B cell (primary cell): ENCODE measurements at regions of chrX and their contacts with region 1.

Region 1: GRCh38 chrX:13658602-13659001 is 5.7 kb downstream of the TCEANC start:
- DNase-seq: peak; percentile 70
- ATAC-seq: no peak
- H3K4me3 ChIP-seq: no peak overlapping the region
- H3K4me3 Mint-ChIP-seq: no peak overlapping the region
- H3K27ac ChIP-seq: peak overlapping the region in 1 of 2 donors; percentile 25
- H3K27ac Mint-ChIP-seq: peak overlapping the region; percentile 61
- H3K4me1 ChIP-seq: peaks cover 8 to 9% of the 10 kb centered on the region in 2 donors
- H3K4me1 Mint-ChIP-seq: peaks cover 12% of the 10 kb centered on the region
- H3K27me3 ChIP-seq: no peaks in the 10 kb centered on the region
- H3K27me3 Mint-ChIP-seq: no peaks in the 10 kb centered on the region
- CTCF ChIP-seq: peak; percentile 62

Region 2: GRCh38 chrX:13515211-13515930 is 143.2 kb before region 1 on chrX:
- CTCF ChIA-PET with region 1: no interaction called
- POLR2A ChIA-PET with region 1: no interaction called
- intact Hi-C with region 1: no loop called
- DNase-seq: no peak
- ATAC-seq: no peak
- H3K4me3 ChIP-seq: no peak overlapping the region
- H3K4me3 Mint-ChIP-seq: no peak overlapping the region
- H3K27ac ChIP-seq: no peak overlapping the region
- H3K27ac Mint-ChIP-seq: no peak overlapping the region
- H3K4me1 ChIP-seq: no peaks in the 10 kb centered on the region
- H3K4me1 Mint-ChIP-seq: no peaks in the 10 kb centered on the region
- H3K27me3 ChIP-seq: peaks cover 0 to 8% (median 0%) of the 10 kb centered on the region in 4 experiments
- H3K27me3 Mint-ChIP-seq: peaks cover 3% of the 10 kb centered on the region
- CTCF ChIP-seq: no peak

Region 3: DNA sequence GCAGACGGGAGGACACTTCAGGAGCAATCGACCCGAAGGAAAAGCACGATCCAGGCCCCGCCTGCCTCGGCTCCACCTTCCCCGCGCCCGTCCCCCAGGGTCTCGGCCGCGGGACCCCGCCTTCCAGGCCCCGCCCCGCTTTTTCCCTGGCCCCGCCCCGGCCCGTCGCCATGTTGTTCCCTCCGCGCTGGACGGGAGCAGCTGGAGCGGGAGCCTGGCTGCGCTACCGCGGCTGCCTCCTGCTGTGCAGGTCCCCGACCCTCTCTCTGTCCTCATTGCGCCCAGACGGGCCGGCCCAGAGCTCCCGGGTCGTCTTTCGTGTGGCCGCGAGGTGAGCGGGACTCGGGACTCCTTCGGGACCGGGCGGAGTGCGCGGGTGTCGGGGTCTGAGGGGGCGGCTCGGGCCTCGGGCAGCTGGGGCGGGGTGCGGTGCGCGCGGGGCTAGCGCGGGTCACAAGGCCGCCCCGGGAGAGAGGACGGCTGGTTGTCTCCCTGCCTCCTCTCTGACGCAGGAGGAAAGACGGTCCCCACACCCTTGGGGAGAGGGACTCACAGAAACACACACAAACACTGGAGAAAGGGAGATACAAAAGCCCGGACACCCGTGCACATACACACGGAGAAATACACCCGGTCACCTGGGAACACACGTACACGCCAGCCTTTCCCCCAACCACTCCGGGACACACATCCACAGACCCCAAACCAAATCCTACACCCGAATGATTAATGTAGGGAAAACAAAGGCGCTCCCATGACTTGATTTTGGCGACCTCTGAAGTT is 30.5 kb after region 1 on chrX and contains the start of gene RAB9A:
- CTCF ChIA-PET with region 1: interaction called, 3 read pairs
- POLR2A ChIA-PET with region 1: interaction called, 3 read pairs
- intact Hi-C with region 1: loop called (anchors 2 kb)
- DNase-seq: peak; percentile 79
- ATAC-seq: peak; percentile 91
- H3K4me3 ChIP-seq: peak within 1 kb of the TSS; percentile 61 to 89 (median 78)
- H3K4me3 Mint-ChIP-seq: peak within 1 kb of the TSS; percentile 93
- H3K27ac ChIP-seq: peak within 1 kb of the TSS; percentile 70 to 85
- H3K27ac Mint-ChIP-seq: peak within 1 kb of the TSS; percentile 91
- H3K4me1 ChIP-seq: peaks cover 41 to 43% of the 10 kb centered on the region in 2 donors
- H3K4me1 Mint-ChIP-seq: peaks cover 53% of the 10 kb centered on the region
- H3K27me3 ChIP-seq: no peaks in the 10 kb centered on the region
- H3K27me3 Mint-ChIP-seq: no peaks in the 10 kb centered on the region
- CTCF ChIP-seq: no peak
- total RNA-seq, gene RAB9A: 16.7 and 17.1 TPM in 2 replicates

Region 4: DNA sequence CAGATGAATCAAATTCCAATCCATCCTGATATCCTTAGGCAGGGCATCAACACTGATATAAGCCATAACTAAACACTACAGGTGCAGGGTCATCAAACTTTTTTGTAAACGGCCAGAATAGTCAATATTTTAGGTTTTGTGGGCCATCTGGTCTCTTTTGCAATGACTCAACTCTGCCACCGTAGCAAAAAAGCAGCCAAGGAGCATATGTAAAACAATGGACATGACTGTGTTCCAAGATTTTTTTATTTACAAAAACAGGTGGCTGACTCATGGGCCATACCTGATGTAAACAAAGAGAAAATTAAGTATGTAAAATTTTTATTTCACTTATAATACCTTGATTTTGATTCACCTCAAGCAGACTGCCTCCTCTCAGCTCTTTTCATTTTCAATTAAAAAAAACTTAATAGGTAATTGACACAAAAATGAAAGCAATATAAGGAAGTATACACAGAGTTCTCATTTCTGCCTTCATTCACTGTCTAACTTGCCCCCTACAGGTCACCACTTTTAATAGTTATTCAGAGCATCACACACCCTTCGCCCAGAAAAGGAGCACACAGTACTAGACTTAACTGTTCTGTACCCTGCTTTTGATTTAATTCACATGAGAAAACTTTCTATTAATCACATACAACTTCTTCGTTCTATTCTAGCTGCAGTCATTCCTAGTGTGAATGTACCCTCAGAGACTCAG is 193.5 kb after region 1 on chrX:
- CTCF ChIA-PET with region 1: no interaction called
- POLR2A ChIA-PET with region 1: no interaction called
- intact Hi-C with region 1: loop called (anchors 2 kb)
- DNase-seq: peak; percentile 33
- ATAC-seq: no peak
- H3K4me3 ChIP-seq: no peak overlapping the region
- H3K4me3 Mint-ChIP-seq: no peak overlapping the region
- H3K27ac ChIP-seq: no peak overlapping the region
- H3K27ac Mint-ChIP-seq: no peak overlapping the region
- H3K4me1 ChIP-seq: no peaks in the 10 kb centered on the region
- H3K4me1 Mint-ChIP-seq: peaks cover 3% of the 10 kb centered on the region
- H3K27me3 ChIP-seq: peaks cover 0 to 3% (median 0%) of the 10 kb centered on the region in 4 experiments
- H3K27me3 Mint-ChIP-seq: no peaks in the 10 kb centered on the region
- CTCF ChIP-seq: peak; percentile 32

Region 5: GRCh38 chrX:13864264-13864663 is 205.7 kb after region 1 on chrX:
- CTCF ChIA-PET with region 1: no interaction called
- POLR2A ChIA-PET with region 1: no interaction called
- intact Hi-C with region 1: no loop called
- DNase-seq: no peak
- ATAC-seq: no peak
- H3K4me3 ChIP-seq: no peak overlapping the region
- H3K4me3 Mint-ChIP-seq: no peak overlapping the region
- H3K27ac ChIP-seq: no peak overlapping the region
- H3K27ac Mint-ChIP-seq: no peak overlapping the region
- H3K4me1 ChIP-seq: no peaks in the 10 kb centered on the region
- H3K4me1 Mint-ChIP-seq: peaks cover 9% of the 10 kb centered on the region
- H3K27me3 ChIP-seq: peaks cover 0 to 8% (median 0%) of the 10 kb centered on the region in 4 experiments
- H3K27me3 Mint-ChIP-seq: peaks cover 10% of the 10 kb centered on the region
- CTCF ChIP-seq: no peak

Region 6: GRCh38 chrX:14056206-14056605 is 397.6 kb after region 1 on chrX:
- CTCF ChIA-PET with region 1: no interaction called
- POLR2A ChIA-PET with region 1: no interaction called
- intact Hi-C with region 1: no loop called
- DNase-seq: no peak
- ATAC-seq: no peak
- H3K4me3 ChIP-seq: no peak overlapping the region
- H3K4me3 Mint-ChIP-seq: no peak overlapping the region
- H3K27ac ChIP-seq: no peak overlapping the region
- H3K27ac Mint-ChIP-seq: no peak overlapping the region
- H3K4me1 ChIP-seq: no peaks in the 10 kb centered on the region
- H3K4me1 Mint-ChIP-seq: no peaks in the 10 kb centered on the region
- H3K27me3 ChIP-seq: peaks cover 0 to 23% (median 0%) of the 10 kb centered on the region in 4 experiments
- H3K27me3 Mint-ChIP-seq: peaks cover 17% of the 10 kb centered on the region
- CTCF ChIP-seq: no peak